Sigmoid colon (tissue), 7 donors: ENCODE measurements at regions of chr2 and their contacts with region 1.

Region 1: DNA sequence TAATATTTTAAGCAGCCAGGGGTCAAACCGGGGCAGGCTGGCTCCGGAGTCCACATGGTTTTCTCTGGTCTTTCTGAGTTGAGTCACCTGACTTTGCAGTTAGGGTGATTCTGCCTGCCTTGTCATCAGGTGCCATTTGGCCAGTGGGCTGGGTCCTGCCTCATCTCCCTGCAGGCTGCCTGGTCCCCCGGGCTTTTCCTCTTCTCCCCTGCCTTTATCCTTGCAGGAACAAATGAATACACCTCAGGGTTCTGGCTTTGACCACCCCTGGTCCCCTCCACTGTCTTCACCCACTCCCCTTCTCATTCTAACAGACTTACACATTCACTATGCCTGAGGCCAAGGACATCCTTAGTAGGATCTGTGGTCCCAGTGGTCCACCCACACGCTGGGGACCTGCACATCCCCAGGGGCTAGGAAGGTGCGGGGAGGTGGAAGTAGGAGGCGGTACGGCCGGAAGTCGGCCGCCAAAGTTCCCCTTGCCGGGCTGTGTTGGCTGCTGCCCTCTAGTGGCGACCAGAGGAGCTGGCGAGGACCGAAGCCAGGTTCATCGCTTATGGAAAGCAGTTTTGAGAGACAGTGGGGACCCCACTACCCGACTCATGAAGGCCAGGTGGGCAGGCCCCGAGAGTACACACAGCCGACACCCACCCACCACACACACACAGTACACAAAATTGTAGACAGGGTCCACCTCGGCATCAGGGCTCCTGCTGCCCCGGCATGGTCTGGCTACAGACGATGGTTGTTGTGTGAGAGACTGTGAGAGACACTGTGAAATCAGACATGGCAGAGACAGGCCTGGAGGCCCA is 6.3 kb upstream of the TEX261 start:
- DNase-seq: peak; percentile 83
- H3K4me3 ChIP-seq: peak overlapping the region in 3 of 4 donors; percentile 11 to 26 (median 23)
- H3K27ac ChIP-seq: no peak overlapping the region
- H3K4me1 ChIP-seq: peaks cover 0 to 7% (median 0%) of the 10 kb centered on the region in 4 donors
- H3K27me3 ChIP-seq: no peaks in the 10 kb centered on the region
- CTCF ChIP-seq: peak; percentile 62 to 91 (median 76)
- EP300 ChIP-seq: no peak
- POLR2A ChIP-seq: no peak

Region 2: GRCh38 chr2:70964596-70965386 is 36.2 kb before region 1 on chr2:
- intact Hi-C with region 1: loop called (anchors 5 kb)
- DNase-seq: peak; percentile 88
- H3K4me3 ChIP-seq: peak overlapping the region; percentile 28 to 53 (median 47)
- H3K27ac ChIP-seq: no peak overlapping the region
- H3K4me1 ChIP-seq: peaks cover 0 to 11% (median 8%) of the 10 kb centered on the region in 4 donors
- H3K27me3 ChIP-seq: peaks cover 0 to 53% (median 15%) of the 10 kb centered on the region in 3 donors
- CTCF ChIP-seq: peak; percentile 68 to 88 (median 78)
- EP300 ChIP-seq: no peak
- POLR2A ChIP-seq: no peak